Left cardiac atrium (tissue), 4 donors: ENCODE measurements at regions of chr15 and their contacts with region 1.

Region 1: DNA sequence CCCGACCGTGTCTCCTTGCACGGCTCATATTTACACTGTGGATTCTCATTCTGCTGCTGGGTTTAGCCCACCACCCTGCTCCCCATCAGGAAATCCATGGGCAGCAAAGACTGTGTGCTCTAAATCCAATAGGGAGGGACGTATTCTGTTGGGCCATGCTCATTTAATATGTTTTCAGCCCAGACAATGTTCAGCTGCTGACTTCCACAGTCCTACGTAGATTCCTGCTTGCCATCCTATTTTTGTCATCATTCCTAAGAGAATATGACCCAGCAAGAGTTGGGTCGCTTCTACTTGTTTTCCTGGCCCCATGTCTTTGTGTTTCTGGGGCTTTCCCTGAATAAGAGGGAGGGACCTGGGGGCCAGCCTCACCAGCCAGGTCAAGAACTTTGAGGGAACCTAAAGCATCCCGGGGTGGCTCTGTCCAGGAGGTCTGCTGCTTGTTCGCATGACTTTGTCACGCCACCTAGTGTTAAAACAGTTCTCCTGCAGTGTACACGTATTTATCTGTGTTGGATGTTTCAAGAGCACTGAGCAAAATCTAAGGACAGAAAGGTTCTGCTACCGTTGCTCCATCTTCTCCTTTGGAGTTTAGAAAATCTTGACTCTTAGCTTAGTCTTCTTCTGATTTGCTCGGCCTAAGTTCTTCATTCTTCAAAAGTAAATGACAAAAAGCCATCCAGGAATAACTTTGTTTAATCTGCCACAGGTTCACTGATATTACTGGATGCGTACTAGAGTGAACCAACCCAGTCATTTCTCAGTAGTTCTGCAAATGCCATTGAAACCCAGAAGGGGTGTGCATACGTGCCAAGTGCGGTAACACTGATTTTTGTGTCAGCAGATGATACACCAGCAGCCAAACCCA is 79.8 kb upstream of the NR2E3 start:
- DNase-seq: peak; percentile 50
- ATAC-seq: peak; percentile 87 to 91

Region 2: GRCh38 chr15:71103102-71103676 is 627.3 kb before region 1 on chr15:
- intact Hi-C with region 1: no loop called
- DNase-seq: peak; percentile 41
- ATAC-seq: peak in 1 of 2 donors; percentile 50

Region 3: GRCh38 chr15:71455107-71455506 is 275.4 kb before region 1 on chr15:
- intact Hi-C with region 1: loop called in 1 of 2 experiments (anchors 10 kb)
- DNase-seq: no peak
- ATAC-seq: no peak

Region 4: GRCh38 chr15:71575474-71576045 is 155.0 kb before region 1 on chr15:
- intact Hi-C with region 1: loop called in 1 of 2 experiments (anchors 10 kb)
- DNase-seq: no peak
- ATAC-seq: no peak